Transverse colon (tissue), 4 donors: ENCODE measurements at regions of chr3 and their contacts with region 1.

Region 1: GRCh38 chr3:84547971-84548970 is 410.5 kb upstream of the CADM2 start:
- DNase-seq: no peak
- H3K4me3 ChIP-seq: no peak overlapping the region
- H3K27ac ChIP-seq: no peak overlapping the region
- H3K4me1 ChIP-seq: no peaks in the 10 kb centered on the region
- H3K27me3 ChIP-seq: no peaks in the 10 kb centered on the region
- CTCF ChIP-seq: peak in 4 of 5 experiments; percentile 41 to 52 (median 46)
- EP300 ChIP-seq: no peak
- POLR2A ChIP-seq: no peak

Region 2: DNA sequence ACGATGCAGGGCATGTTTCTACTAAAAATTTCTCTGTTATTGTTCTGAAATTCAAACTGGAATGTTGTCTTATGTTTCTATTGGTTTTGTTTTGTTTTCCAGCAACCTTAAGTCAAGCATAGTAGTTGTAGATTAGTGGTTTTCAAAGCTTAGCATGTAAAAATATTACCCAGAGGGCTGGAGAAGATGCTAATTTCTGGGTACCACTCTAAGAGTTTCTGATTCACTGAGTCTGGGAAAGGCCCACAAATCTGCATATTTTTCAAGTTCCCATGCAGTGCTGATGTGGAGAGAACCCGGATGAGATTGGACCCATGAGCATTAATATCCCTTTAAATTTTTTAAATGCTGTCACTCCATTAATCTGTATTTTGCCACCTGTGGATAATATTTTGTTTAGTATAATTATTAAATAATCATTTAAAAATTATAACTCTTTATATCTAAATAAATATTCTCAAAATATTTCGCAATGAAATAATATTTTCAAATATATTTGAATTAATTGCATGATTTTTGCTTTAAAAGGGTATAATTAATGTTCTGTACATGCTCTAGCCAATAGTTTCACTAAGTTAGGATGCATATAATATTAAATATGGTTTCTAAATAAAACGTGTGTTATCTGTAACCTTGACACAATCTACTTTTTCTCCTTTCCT is 864.2 kb before region 1 on chr3:
- in situ Hi-C with region 1: no loop called
- intact Hi-C with region 1: no loop called
- DNase-seq: no peak
- H3K4me3 ChIP-seq: no peak overlapping the region
- H3K27ac ChIP-seq: no peak overlapping the region
- H3K4me1 ChIP-seq: no peaks in the 10 kb centered on the region
- H3K27me3 ChIP-seq: no peaks in the 10 kb centered on the region
- CTCF ChIP-seq: no peak
- EP300 ChIP-seq: no peak
- POLR2A ChIP-seq: no peak

Region 3: DNA sequence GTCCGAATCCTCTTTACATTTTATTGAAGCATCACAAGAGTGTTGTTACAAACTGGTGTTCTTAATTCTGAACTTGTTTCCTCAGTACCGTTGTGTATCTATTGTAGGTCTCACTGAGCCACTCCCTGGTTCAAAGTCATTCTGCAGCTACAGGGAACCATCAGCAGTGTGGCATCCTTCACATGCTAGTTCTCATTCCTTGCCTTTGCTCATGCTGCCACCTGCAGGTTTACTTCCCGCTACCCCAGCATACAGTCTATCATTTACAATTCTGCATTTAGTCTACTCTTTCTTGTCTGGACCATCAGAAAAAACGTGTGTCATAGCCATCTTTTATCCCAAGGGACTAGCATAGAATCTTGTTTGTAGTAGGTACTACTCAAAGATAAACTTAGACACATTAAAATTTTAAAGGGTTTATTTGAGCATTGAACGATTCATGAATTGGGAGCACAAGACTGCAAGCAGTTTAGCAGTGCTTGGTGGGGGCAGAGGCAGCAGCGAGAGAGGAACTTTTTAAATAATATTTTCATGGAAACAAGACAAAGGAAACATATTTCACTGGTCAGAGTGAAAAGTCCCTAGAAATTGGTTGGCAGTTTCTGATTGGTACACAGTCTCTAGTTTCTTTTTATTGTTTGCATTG is 812.6 kb after region 1 on chr3:
- in situ Hi-C with region 1: loop called in 1 of 4 experiments (anchors 25 kb)
- intact Hi-C with region 1: no loop called
- DNase-seq: peak; percentile 55
- H3K4me3 ChIP-seq: no peak overlapping the region
- H3K27ac ChIP-seq: no peak overlapping the region
- H3K4me1 ChIP-seq: no peaks in the 10 kb centered on the region
- H3K27me3 ChIP-seq: no peaks in the 10 kb centered on the region
- CTCF ChIP-seq: peak; percentile 24 to 45 (median 37)
- EP300 ChIP-seq: no peak
- POLR2A ChIP-seq: no peak

Region 4: GRCh38 chr3:85567071-85567676 is 1018.9 kb after region 1 on chr3:
- in situ Hi-C with region 1: loop called in 2 of 4 experiments (anchors 25 kb)
- intact Hi-C with region 1: no loop called
- DNase-seq: peak; percentile 30
- H3K4me3 ChIP-seq: no peak overlapping the region
- H3K27ac ChIP-seq: no peak overlapping the region
- H3K4me1 ChIP-seq: no peaks in the 10 kb centered on the region
- H3K27me3 ChIP-seq: no peaks in the 10 kb centered on the region
- CTCF ChIP-seq: peak; percentile 20 to 51 (median 39)
- EP300 ChIP-seq: no peak
- POLR2A ChIP-seq: no peak

Region 5: GRCh38 chr3:85576091-85576690 is 1027.9 kb after region 1 on chr3:
- in situ Hi-C with region 1: loop called (anchors 25 kb)
- intact Hi-C with region 1: no loop called
- DNase-seq: peak; percentile 42
- H3K4me3 ChIP-seq: no peak overlapping the region
- H3K27ac ChIP-seq: no peak overlapping the region
- H3K4me1 ChIP-seq: no peaks in the 10 kb centered on the region
- H3K27me3 ChIP-seq: no peaks in the 10 kb centered on the region
- CTCF ChIP-seq: peak; percentile 60 to 87 (median 77)
- EP300 ChIP-seq: no peak
- POLR2A ChIP-seq: no peak